ENCODE measurements at regions of chr5 and their contacts with region 1.

Region 1: DNA sequence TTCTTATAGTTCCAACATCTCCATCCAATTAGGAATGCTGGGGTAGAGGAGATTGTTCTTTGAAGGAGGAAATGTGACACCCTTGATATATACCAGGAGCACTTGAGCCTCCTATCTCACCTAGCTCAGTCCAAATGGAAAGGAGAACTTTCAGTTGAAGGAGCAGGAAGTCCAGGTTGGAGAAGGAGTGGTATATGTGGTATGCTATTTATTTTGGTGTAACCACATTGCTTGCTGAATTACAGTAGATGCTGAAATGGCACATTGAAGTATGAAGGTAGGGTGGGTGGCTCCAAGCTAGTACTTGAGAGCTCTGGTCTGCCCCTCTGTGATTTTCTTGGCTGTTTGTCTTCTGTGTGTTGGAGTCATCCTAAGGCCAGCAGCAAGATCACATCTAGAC is 6.1 kb downstream of the CSNK1G3 start:
- DNase-seq: no peak
- H3K4me3 Mint-ChIP-seq: no peak overlapping the region
- H3K27ac Mint-ChIP-seq: no peak overlapping the region
- H3K4me1 Mint-ChIP-seq: peaks cover 47% of the 10 kb centered on the region
- H3K27me3 Mint-ChIP-seq: no peaks in the 10 kb centered on the region

Region 2: DNA sequence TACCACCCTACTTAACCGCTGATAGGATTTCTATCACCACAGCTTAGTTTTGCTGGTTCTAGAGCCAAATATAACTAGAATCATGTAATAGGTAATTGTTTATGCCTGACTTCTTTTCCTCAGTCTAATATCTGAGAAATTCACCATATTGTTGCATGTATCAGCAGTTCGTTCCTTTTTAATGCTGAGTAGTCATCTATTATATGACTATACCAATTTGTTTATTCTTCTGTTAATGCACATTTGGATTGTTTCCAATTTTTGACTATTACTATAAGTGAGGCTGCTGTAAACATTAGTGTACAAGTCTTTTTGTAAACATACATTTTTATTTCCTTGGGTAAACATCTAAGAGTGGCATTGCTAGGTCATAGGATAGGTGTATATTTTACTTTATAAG is 19.7 kb after region 1 on chr5:
- intact Hi-C with region 1: loop called (anchors 2 kb)
- DNase-seq: no peak
- H3K4me3 Mint-ChIP-seq: no peak overlapping the region
- H3K27ac Mint-ChIP-seq: no peak overlapping the region
- H3K4me1 Mint-ChIP-seq: peaks cover 11% of the 10 kb centered on the region
- H3K27me3 Mint-ChIP-seq: no peaks in the 10 kb centered on the region

Measured in activated CD4-positive, alpha-beta T cell treated with anti-CD3 and anti-CD28 coated beads, Interleukin-2, amount 10 ng/mL, durations not matched to agents 24 days and 14 days (primary cell).